Colonic mucosa (tissue), 4 donors: ENCODE measurements at regions of chr3 and their contacts with region 1.

Region 1: DNA sequence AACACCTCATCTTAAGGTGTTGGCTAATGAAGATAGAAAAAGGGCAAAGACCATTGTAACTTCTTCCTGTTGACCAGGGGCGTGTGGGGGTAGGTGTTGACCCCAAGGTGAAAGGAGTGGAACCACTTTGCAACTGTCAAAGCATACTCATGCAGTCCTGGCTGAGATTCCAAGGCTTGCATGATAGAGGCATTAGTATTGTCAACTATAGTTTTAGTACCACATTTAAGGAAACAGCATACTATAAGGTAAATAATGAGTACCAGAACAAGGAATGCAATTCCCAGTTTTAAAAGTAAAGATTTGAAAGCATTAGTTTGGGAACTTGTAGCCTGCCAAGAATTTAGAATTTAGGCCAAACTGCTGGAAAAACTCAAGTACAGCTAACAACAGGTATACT is 27.8 kb upstream of the ADGRG7 start:
- DNase-seq: no peak
- H3K4me3 ChIP-seq: no peak overlapping the region
- H3K27ac ChIP-seq: no peak overlapping the region
- H3K4me1 ChIP-seq: no peaks in the 10 kb centered on the region
- H3K27me3 ChIP-seq: no peaks in the 10 kb centered on the region
- CTCF ChIP-seq: no peak

Region 2: DNA sequence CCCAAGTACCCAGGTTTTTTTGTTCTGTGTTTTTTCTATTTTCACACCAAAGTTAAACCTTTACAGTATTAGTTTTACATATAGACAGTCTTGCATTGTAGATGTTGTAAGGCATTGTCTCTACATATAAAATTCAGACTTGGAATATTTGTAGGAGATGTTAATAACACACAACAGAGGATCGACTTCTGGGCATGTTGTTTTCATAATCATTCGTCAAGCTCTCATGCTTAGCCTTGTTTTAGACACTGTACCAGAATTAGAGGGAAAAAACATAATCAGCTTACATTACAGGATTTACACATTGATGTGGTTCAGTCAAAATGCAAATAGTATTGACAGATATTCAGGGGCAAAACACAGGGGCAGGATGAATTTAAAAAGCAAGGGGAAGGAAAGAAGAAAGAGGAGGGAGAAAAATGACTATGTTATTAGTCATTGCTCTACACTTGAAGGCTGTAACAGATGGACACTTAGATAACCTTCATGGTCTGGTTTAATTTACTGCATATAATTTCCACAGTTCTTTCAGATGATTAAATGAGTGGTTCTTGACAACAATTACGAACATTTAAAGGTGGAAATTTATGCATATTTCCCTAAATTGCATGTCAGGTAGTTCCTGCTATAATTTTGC is 756.5 kb before region 1 on chr3:
- intact Hi-C with region 1: loop called (anchors 10 kb)
- DNase-seq: no peak
- H3K4me3 ChIP-seq: no peak overlapping the region
- H3K27ac ChIP-seq: no peak overlapping the region
- H3K4me1 ChIP-seq: no peaks in the 10 kb centered on the region
- H3K27me3 ChIP-seq: no peaks in the 10 kb centered on the region
- CTCF ChIP-seq: no peak

Region 3: GRCh38 chr3:100463002-100463401 is 118.6 kb before region 1 on chr3:
- intact Hi-C with region 1: loop called (anchors 5 kb)
- DNase-seq: peak; percentile 42
- H3K4me3 ChIP-seq: no peak overlapping the region
- H3K27ac ChIP-seq: no peak overlapping the region
- H3K4me1 ChIP-seq: no peaks in the 10 kb centered on the region
- H3K27me3 ChIP-seq: no peaks in the 10 kb centered on the region
- CTCF ChIP-seq: peak; percentile 64